ENCODE measurements at regions of chr6 and their contacts with region 1.

Region 1: GRCh38 chr6:2841264-2842138 is at the start of gene SERPINB1:
- DNase-seq: peak; percentile 71
- ATAC-seq: peak; percentile 77
- H3K4me3 Mint-ChIP-seq: peak within 1 kb of the TSS; percentile 86
- H3K27ac Mint-ChIP-seq: peak within 1 kb of the TSS; percentile 85
- H3K4me1 Mint-ChIP-seq: peaks cover 51% of the 10 kb centered on the region
- H3K27me3 Mint-ChIP-seq: no peaks in the 10 kb centered on the region
- CTCF ChIP-seq: no peak
- total RNA-seq, gene SERPINB1: 59.9 and 60.5 TPM in 2 replicates

Region 2: DNA sequence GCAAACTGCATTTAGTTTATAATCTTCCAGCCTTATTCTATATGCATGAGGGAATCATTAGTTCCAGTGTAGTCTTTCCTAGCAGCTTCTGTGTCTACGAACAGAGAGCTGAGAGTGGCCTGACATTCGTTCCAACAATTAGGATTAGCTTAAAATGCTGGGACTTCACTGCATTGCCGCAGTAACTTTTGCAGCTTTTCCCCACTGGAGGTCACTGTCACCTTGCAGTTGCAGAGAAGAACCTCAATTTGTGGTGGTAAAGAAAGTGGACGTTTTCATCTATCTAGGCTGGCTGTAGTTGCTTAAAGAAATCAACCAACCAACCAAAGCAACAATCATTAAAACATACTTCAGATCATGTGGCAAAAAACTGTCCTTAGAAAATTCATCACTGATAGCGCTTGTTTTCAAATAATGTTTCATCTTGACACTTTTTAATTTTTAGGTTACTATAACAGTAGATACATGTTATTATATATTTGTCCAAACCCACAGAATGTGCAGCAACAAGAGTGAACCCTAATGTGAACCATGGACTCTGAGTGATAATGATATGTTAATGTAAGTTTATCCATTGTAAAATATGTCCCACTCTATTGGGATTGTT is 103.0 kb before region 1 on chr6:
- CTCF ChIA-PET with region 1: interaction called, 5 read pairs
- POLR2A ChIA-PET with region 1: interaction called, 5 read pairs
- intact Hi-C with region 1: loop called (anchors 1 kb)
- DNase-seq: no peak
- ATAC-seq: no peak
- H3K4me3 Mint-ChIP-seq: no peak overlapping the region
- H3K27ac Mint-ChIP-seq: no peak overlapping the region
- H3K4me1 Mint-ChIP-seq: peaks cover 10% of the 10 kb centered on the region
- H3K27me3 Mint-ChIP-seq: no peaks in the 10 kb centered on the region
- CTCF ChIP-seq: no peak

Region 3: DNA sequence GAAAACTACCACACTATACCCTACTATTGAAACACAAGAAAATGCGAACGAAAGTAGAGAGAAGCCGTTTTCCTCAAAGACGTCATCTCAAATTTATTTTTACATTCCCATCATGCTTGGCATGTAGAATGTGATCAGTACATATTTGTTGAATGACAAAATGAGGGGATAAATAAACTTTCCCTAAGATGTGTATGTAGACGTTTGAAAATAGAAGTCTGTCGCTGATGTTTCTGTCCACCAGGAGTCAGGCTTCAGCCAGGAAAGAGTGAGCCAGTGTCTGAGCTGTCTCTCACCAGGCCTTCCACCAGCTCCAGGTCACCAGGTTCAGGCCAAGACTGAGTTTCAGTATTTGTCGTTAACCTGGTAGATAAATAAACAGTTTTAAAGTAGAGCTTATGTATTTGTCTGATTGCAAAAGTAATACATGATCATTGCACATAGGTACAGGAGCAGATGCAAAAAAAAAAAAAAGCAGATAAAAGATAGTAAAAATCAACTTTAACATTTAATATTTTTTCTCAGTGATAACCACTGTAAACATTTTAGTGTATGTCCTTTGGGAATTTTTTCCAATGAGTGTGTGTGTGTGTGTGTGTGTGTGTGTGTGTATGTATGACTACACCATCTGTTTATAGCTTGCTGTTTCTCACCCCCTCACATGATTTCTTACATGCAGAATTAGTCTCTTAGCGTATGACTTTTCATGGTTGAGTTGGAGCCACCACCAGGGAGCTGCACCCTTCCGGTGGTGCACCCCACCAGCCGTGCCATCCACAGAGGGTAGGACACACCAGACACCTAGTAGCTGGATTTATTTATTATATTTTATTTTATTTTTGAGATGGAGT is 50.2 kb before region 1 on chr6:
- CTCF ChIA-PET with region 1: interaction called, 45 read pairs
- POLR2A ChIA-PET with region 1: interaction called, 13 read pairs
- intact Hi-C with region 1: loop called (anchors 1 kb)
- DNase-seq: no peak
- ATAC-seq: peak; percentile 91
- H3K4me3 Mint-ChIP-seq: peak overlapping the region; percentile 72
- H3K27ac Mint-ChIP-seq: peak overlapping the region; percentile 67
- H3K4me1 Mint-ChIP-seq: peaks cover 41% of the 10 kb centered on the region
- H3K27me3 Mint-ChIP-seq: no peaks in the 10 kb centered on the region
- CTCF ChIP-seq: no peak

Region 4: GRCh38 chr6:2810092-2810671 is 31.3 kb before region 1 on chr6:
- CTCF ChIA-PET with region 1: no interaction called
- POLR2A ChIA-PET with region 1: no interaction called
- intact Hi-C with region 1: no loop called
- DNase-seq: no peak
- ATAC-seq: no peak
- H3K4me3 Mint-ChIP-seq: no peak overlapping the region
- H3K27ac Mint-ChIP-seq: no peak overlapping the region
- H3K4me1 Mint-ChIP-seq: no peaks in the 10 kb centered on the region
- H3K27me3 Mint-ChIP-seq: no peaks in the 10 kb centered on the region
- CTCF ChIP-seq: no peak

Region 5: DNA sequence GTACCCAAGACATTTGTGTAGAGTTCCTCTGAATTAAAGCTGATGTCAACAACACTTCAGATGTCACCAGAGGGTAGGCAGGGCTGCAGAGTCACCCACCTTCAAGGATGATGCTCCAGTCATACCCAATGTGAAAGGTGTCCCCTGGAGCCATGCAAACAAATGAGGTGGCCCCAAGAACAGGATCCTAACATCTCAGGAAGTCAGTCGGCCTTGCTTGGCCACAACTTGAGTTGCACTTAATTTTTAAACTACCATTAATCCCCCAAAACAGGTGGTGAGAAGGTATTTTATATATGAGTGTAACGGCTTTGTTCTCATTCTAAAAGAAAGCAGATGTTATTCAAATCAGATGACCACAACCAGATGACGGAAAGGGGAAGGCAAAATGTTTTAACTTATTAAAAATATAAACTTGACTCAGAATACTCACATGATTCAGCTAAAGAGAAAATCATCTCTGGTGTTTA is 21.2 kb after region 1 on chr6:
- CTCF ChIA-PET with region 1: interaction called, 37 read pairs
- POLR2A ChIA-PET with region 1: interaction called, 126 read pairs
- intact Hi-C with region 1: loop called (anchors 1 kb)
- DNase-seq: no peak
- ATAC-seq: peak; percentile 56
- H3K4me3 Mint-ChIP-seq: peak overlapping the region; percentile 56
- H3K27ac Mint-ChIP-seq: peak overlapping the region; percentile 92
- H3K4me1 Mint-ChIP-seq: peaks cover 91% of the 10 kb centered on the region
- H3K27me3 Mint-ChIP-seq: no peaks in the 10 kb centered on the region
- CTCF ChIP-seq: no peak

Region 6: GRCh38 chr6:2911171-2911570 is 69.7 kb after region 1 on chr6:
- CTCF ChIA-PET with region 1: interaction called, 100 read pairs
- POLR2A ChIA-PET with region 1: interaction called, 39 read pairs
- intact Hi-C with region 1: loop called (anchors 1 kb)
- DNase-seq: no peak
- ATAC-seq: peak; percentile 80
- H3K4me3 Mint-ChIP-seq: peak overlapping the region; percentile 51
- H3K27ac Mint-ChIP-seq: peak overlapping the region; percentile 88
- H3K4me1 Mint-ChIP-seq: peaks cover 43% of the 10 kb centered on the region
- H3K27me3 Mint-ChIP-seq: no peaks in the 10 kb centered on the region
- CTCF ChIP-seq: no peak

Region 7: DNA sequence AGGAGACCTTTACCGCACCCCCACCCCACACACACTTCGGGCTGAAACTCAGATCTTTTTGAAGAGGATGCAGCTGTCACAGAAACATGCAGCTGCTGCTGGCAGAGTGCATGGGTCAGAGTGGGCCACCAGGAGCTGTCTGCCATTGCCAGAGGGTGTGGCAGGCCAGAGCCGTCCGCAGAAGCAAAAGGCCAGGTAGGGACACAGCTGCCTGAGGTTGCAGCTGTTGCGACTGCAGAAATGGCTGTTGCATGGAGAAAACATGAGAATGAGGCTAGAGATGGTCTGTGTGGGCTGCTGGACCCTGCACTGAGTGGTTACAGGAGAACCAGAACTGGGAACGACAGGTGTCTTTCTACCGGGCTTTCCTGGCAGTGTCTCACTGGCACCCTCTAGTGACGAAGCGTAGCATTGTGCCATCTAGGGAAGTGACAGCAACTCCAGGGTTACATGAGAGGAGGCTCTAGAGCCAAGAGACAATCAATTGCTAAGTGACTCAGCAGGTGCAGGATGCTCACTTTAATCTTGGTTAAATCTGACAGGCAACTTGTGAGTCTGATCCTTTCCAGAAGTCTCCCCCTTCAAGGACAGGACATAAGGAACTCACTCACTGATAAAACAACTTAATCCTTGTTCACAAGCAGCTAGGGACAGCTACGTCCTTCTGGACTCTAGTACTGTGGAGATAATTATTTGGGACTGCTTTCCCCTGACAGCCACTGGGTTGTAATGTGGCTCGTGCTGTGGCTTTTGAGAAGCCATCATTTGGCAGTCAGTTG is 90.7 kb after region 1 on chr6:
- CTCF ChIA-PET with region 1: interaction called, 177 read pairs
- POLR2A ChIA-PET with region 1: interaction called, 32 read pairs
- intact Hi-C with region 1: loop called (anchors 1 kb)
- DNase-seq: peak; percentile 72
- ATAC-seq: peak; percentile 97
- H3K4me3 Mint-ChIP-seq: peak overlapping the region; percentile 73
- H3K27ac Mint-ChIP-seq: no peak overlapping the region
- H3K4me1 Mint-ChIP-seq: peaks cover 18% of the 10 kb centered on the region
- H3K27me3 Mint-ChIP-seq: no peaks in the 10 kb centered on the region
- CTCF ChIP-seq: peak; percentile 64

Region 8: GRCh38 chr6:3118353-3119039 is 277.0 kb after region 1 on chr6 and contains the start of gene BPHL:
- CTCF ChIA-PET with region 1: no interaction called
- POLR2A ChIA-PET with region 1: no interaction called
- intact Hi-C with region 1: loop called (anchors 1 kb)
- DNase-seq: peak; percentile 100
- ATAC-seq: peak; percentile 92
- H3K4me3 Mint-ChIP-seq: peak within 1 kb of the TSS; percentile 89
- H3K27ac Mint-ChIP-seq: peak within 1 kb of the TSS; percentile 93
- H3K4me1 Mint-ChIP-seq: peaks cover 16% of the 10 kb centered on the region
- H3K27me3 Mint-ChIP-seq: no peaks in the 10 kb centered on the region
- CTCF ChIP-seq: no peak
- total RNA-seq, gene BPHL: 10.5 and 11.0 TPM in 2 replicates

Region 9: DNA sequence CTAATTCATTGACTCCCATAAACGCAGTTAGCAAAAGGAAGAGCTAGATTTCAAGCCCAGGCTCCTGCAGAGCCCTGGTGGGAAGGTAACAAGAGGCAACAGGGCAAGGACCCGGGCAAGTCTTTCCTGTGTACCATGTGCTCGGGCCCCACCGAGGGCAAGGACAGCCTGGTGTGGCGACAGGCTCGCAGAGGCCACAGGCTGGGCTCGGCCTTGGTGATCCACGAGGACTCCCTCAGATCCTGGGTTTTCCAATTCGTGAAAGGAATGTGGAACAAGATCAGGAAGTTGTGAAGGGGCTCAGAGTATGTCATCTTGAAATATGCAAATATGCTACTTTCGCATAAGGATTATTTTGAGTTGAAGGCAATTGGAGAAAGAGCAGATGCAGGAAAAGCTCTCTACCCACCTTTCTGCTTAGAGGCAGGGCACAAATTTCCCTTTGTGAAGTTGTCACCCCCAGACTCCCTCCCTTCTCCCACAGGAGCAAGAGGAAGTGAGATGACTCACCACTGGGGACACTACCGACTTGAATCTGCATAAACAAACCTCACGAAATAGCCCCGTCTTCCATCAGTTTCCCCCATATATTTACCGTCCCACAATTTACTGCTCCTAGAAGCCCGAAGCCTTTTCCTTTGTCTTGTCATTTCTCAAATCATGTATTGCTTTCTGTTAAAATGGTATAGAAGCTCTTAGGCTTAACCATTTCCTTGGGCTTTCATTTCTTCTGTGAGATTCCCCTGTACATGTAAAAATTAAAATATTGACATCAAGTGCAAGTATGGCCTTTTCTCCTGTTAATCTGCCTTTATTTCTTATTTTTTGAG is 496.2 kb after region 1 on chr6:
- CTCF ChIA-PET with region 1: no interaction called
- POLR2A ChIA-PET with region 1: no interaction called
- intact Hi-C with region 1: no loop called
- DNase-seq: no peak
- ATAC-seq: peak; percentile 37
- H3K4me3 Mint-ChIP-seq: peak overlapping the region; percentile 5
- H3K27ac Mint-ChIP-seq: no peak overlapping the region
- H3K4me1 Mint-ChIP-seq: peaks cover 12% of the 10 kb centered on the region
- H3K27me3 Mint-ChIP-seq: peaks cover 17% of the 10 kb centered on the region
- CTCF ChIP-seq: no peak